ENCODE measurements at regions of chr16 and their contacts with region 1.

Region 1: GRCh38 chr16:88442727-88443576 is 10.1 kb upstream of the ZFPM1 start:
- DNase-seq: peak; percentile 77 to 89 (median 82)
- ATAC-seq: peak; percentile 91
- H3K4me3 ChIP-seq: no peak overlapping the region
- H3K4me1 ChIP-seq: peaks cover 5% of the 10 kb centered on the region
- CTCF ChIP-seq: peak; percentile 85

Region 2: DNA sequence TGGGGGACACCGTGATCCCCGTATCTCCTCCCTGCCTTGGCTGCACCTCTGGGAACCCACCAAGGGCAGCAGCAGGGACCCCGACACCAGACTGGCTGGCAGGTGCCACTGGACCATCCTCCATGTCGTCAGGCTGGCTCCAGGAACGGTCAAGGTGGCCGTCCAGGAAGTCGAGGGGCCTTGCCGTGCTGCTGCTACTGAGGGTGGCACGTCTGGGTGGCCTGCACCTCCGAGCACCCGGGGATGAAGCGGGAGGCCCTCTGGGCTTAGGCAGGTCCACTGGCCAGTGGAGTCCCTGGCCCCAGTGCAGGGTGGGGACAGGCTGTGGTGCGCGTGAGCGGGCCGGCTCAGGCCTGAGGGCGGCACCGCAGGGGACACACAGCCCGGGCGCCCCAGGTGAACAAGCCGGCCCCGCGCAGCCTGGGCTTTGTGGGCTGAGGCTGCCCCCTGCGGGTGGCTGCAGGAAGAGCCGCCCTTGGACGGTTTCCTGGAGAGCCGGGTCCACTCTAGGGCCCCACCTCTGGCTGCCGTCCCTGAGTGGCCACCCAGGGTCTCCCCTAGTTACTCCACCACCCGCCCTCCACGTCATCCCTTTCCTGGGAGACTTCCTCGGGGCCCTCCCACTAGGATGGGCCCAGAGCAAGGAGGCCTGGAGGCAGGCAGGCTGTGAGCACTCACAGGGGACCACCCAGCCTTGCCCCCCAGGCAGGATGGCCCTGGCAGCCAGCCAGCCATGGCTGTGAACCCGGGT is 84.4 kb after region 1 on chr16:
- intact Hi-C with region 1: loop called (anchors 5 kb)
- DNase-seq: peak in 2 of 3 donors; percentile 78 to 84
- ATAC-seq: peak; percentile 79
- H3K4me3 ChIP-seq: no peak overlapping the region
- H3K4me1 ChIP-seq: peaks cover 26% of the 10 kb centered on the region
- CTCF ChIP-seq: peak; percentile 84

Region 3: DNA sequence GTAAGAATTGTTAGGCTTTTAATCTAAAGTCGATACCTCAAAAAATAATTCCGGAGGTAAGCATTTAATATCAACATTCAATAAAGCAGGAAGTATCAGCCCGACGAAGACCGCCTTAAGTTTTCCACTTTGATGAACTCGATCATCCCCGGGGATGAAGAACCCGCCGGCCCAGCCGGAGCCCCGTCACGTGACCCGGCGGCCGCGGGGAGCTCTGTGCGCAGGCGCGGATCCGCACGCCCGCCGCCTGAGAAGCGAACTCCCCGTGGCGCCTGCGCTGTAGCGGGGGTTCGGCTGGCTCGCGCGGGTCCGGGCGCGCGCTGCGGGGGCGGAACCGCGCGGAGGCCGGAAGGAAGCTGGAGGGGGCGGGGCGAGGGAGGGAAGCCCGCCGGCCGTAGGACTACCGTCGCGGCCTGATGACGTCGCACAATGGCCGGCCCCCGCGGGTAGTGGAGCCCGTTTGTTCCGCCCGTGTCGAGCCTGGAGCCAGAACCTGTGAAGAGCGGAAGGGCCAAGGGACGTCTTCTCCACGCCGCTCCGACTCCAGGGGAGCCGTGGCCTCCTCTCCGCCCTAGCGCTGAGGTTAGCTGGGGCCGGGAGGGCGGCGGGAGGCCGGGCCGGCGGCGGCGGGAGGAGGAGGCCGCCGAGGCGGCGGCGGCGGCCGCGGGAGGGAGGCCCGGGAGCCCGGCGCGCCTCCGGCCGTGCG is 127.2 kb after region 1 on chr16 and contains the start of gene ZC3H18:
- intact Hi-C with region 1: loop called in 1 of 2 experiments (anchors 10 kb)
- DNase-seq: peak; percentile 97 to 98 (median 98)
- ATAC-seq: peak; percentile 99
- H3K4me3 ChIP-seq: peak within 1 kb of the TSS; percentile 71
- H3K4me1 ChIP-seq: peaks cover 18% of the 10 kb centered on the region
- CTCF ChIP-seq: no peak
- total RNA-seq, gene ZC3H18: 37.4 to 54.8 (median 48.1) TPM

Measured in mucosa of descending colon (tissue), 3 donors.